GM12878 (cell line): ENCODE measurements at regions of chr2 and their contacts with region 1.

Region 1: DNA sequence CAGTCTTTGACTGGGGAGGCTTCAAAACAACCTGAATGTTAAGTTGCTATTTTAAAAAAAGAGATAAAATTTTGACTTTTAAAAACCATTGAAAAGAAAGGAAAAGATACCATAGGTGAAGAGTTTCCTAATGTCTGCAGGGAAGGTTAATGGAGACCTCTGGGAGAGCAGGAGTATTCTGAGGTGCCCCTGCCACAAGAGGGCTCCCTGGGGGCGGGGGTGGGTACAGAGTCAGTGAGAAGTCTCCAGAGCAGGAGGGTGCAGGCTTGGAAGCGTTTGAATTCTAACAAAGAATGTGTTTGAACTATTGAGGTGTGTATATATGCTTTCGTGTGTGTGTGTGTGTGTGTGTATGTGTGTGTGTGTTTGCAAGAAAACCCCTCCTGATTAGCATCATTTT is 46.7 kb upstream of the ST6GAL2 start:
- DNase-seq: no peak
- ATAC-seq: no peak
- H3K4me3 ChIP-seq: no peak overlapping the region
- H3K27ac ChIP-seq: no peak overlapping the region
- H3K4me1 ChIP-seq: no peaks in the 10 kb centered on the region
- H3K27me3 ChIP-seq: no peaks in the 10 kb centered on the region
- CTCF ChIP-seq: no peak
- EP300 ChIP-seq: no peak
- POLR2A ChIP-seq: no peak
- RAD21 ChIP-seq: no peak

Region 2: GRCh38 chr2:106876699-106877098 is 55.9 kb before region 1 on chr2:
- CTCF ChIA-PET with region 1: no interaction called
- POLR2A ChIA-PET with region 1: no interaction called
- RAD21 ChIA-PET with region 1: no interaction called
- SMC1A ChIA-PET with region 1: no interaction called
- in situ Hi-C with region 1: loop called (anchors 5 kb)
- intact Hi-C with region 1: no loop called
- DNase-seq: no peak
- ATAC-seq: no peak
- H3K4me3 ChIP-seq: no peak overlapping the region
- H3K27ac ChIP-seq: no peak overlapping the region
- H3K4me1 ChIP-seq: no peaks in the 10 kb centered on the region
- H3K27me3 ChIP-seq: no peaks in the 10 kb centered on the region
- CTCF ChIP-seq: no peak
- EP300 ChIP-seq: no peak
- POLR2A ChIP-seq: no peak
- RAD21 ChIP-seq: no peak

Region 3: GRCh38 chr2:106944215-106944614 is 11.6 kb after region 1 on chr2:
- CTCF ChIA-PET with region 1: no interaction called
- POLR2A ChIA-PET with region 1: no interaction called
- RAD21 ChIA-PET with region 1: no interaction called
- SMC1A ChIA-PET with region 1: no interaction called
- in situ Hi-C with region 1: no loop called
- intact Hi-C with region 1: no loop called
- DNase-seq: no peak
- ATAC-seq: no peak
- H3K4me3 ChIP-seq: no peak overlapping the region
- H3K27ac ChIP-seq: no peak overlapping the region
- H3K4me1 ChIP-seq: no peaks in the 10 kb centered on the region
- H3K27me3 ChIP-seq: no peaks in the 10 kb centered on the region
- CTCF ChIP-seq: no peak
- EP300 ChIP-seq: no peak
- POLR2A ChIP-seq: no peak
- RAD21 ChIP-seq: no peak